Activated T-helper 2 cell treated with anti-CD3 and anti-CD28 coated beads, Interferon-gamma antibody, Interleukin-2, Interleukin-4, amounts not matched to agents 10 μg/mL and 5 μg/mL and 100 μg/mL, durations not matched to agents 14 hours and 24 hours and 36 hours (primary cell): ENCODE measurements at regions of chr9 and their contacts with region 1.

Region 1: DNA sequence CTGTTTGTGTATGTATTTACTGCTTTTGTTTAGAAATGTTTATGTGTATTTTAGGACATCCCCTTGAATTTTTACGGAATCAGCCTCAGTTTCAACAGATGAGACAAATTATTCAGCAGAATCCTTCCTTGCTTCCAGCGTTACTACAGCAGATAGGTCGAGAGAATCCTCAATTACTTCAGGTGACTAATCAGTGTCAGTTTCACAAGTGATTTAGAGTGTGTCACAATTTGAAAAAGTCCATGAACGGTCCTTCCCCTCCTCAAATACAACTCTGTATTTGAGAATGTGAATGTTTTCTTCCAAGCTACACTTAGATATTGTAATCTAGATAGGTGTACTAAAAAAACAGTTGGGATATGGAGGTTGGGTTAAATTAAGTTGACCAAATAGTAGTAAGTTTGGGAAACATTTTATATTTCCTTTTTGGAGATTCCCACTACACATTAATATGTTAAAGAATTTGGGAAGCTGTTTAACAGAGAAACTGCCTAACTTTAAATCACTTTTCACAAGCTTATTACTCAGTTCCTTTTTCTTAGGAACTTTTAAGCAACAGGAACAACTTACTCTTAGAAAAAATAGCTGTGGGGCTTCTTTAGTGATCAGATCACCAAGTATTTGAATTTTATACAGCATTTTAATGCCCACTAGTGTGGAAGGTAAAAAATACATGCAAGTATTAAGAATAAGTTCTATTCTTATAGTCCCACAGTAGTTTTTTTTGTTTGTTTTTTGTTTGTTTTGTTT is 40.9 kb downstream of the RAD23B start:
- DNase-seq: no peak
- H3K4me3 Mint-ChIP-seq: no peak overlapping the region
- H3K27ac Mint-ChIP-seq: no peak overlapping the region
- H3K4me1 Mint-ChIP-seq: peaks cover 28% of the 10 kb centered on the region
- H3K27me3 Mint-ChIP-seq: no peaks in the 10 kb centered on the region

Region 2: GRCh38 chr9:107227781-107228195 is 96.2 kb before region 1 on chr9:
- intact Hi-C with region 1: no loop called
- DNase-seq: no peak
- H3K4me3 Mint-ChIP-seq: no peak overlapping the region
- H3K27ac Mint-ChIP-seq: no peak overlapping the region
- H3K4me1 Mint-ChIP-seq: no peaks in the 10 kb centered on the region
- H3K27me3 Mint-ChIP-seq: peaks cover 41% of the 10 kb centered on the region

Region 3: DNA sequence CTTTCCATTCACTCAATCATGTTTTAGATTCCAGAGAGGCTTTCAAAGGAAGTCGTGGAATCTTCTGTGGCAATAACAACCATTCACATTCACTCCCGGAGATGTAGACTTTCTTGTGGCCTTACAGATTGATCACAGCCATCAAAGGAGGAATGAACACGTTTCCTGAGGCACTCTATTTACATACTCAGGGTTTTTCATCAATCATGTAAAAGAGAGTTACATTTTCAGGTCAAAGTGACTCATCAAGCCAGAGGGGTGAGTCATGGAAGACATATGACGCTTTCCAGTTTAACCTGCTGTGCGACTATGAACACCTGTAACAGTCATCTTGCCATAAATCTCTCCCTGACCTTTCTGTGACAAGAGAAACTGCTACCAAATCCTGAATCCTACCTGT is 80.3 kb before region 1 on chr9:
- intact Hi-C with region 1: loop called (anchors 5 kb)
- DNase-seq: no peak
- H3K4me3 Mint-ChIP-seq: no peak overlapping the region
- H3K27ac Mint-ChIP-seq: peak overlapping the region; percentile 68
- H3K4me1 Mint-ChIP-seq: peaks cover 21% of the 10 kb centered on the region
- H3K27me3 Mint-ChIP-seq: no peaks in the 10 kb centered on the region